ENCODE measurements at regions of chr11 and their contacts with region 1.

Region 1: DNA sequence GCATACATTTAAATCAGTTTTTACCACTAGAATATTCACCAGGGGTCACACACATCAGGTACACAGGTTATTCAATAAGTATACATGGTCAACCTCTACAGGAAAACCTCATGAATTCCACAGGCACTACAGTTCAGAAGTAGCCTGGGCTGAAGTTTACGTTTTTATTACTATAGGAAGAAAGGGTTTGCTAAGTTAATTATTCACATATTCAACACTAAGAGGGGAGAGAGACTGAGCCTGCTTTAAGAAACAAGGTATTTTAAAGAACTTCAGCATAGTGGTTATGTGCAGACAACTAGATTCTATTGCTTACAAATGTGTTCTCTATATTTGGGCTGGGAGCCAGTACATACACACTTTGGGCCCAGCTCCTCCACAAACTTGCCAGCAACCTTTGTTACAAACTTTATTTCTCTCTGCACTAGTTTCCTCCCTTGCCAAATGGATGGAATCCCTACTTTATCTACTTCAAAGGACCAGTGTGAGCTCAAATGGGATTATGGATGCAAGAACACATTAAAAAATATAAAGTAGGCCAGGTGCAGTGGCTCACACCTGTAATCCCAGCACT is 31.9 kb downstream of the IL18BP start:
- DNase-seq: no peak
- H3K4me3 ChIP-seq: no peak overlapping the region
- H3K27ac ChIP-seq: no peak overlapping the region
- H3K4me1 ChIP-seq: peaks cover 2% of the 10 kb centered on the region
- H3K27me3 ChIP-seq: no peaks in the 10 kb centered on the region
- CTCF ChIP-seq: no peak
- POLR2A ChIP-seq: no peak

Region 2: GRCh38 chr11:71977743-71978418 is 52.7 kb before region 1 on chr11:
- CTCF ChIA-PET with region 1: interaction called, 13 read pairs
- POLR2A ChIA-PET with region 1: no interaction called
- dilution Hi-C with region 1: no loop called
- intact Hi-C with region 1: no loop called
- DNase-seq: peak; percentile 67
- H3K4me3 ChIP-seq: no peak overlapping the region
- H3K27ac ChIP-seq: no peak overlapping the region
- H3K4me1 ChIP-seq: no peaks in the 10 kb centered on the region
- H3K27me3 ChIP-seq: no peaks in the 10 kb centered on the region
- CTCF ChIP-seq: peak; percentile 54 to 57
- POLR2A ChIP-seq: no peak

Region 3: DNA sequence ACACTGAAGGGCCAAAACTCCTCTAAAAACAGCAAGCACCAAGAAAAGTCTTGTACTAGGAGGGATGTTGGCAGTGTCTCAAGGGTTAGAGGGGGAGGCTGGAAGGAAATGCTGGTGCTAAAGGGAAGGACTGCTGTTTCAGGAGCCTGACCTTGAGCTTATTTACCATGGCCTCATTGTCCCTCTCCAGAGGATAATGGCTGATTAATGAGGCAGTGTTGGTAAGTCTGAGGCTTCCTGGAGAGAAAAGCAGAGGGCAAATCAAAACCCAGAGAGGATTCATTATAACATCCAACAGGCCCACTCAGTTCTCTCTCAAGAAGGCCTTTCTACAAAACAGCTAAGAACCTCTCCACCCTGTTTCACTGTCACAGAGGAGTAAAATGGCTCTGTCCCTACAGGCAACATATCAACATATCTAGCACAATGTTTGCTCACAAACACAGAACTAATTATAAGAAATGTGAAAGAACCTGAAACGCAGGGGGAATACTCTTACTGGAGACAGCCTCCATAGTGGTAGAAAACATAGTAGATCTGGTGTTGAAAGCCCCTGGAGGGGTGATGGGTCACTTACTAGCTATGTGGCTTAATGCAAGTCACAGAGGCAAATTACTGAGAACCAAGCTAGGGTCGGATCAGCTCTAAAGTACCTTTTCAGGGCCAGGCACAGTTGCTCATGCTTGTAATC is 18.4 kb after region 1 on chr11:
- CTCF ChIA-PET with region 1: interaction called, 28 read pairs
- POLR2A ChIA-PET with region 1: no interaction called
- dilution Hi-C with region 1: no loop called
- intact Hi-C with region 1: no loop called
- DNase-seq: peak; percentile 90
- H3K4me3 ChIP-seq: peak overlapping the region in 1 of 3 experiments; percentile 15
- H3K27ac ChIP-seq: peak overlapping the region; percentile 40
- H3K4me1 ChIP-seq: peaks cover 8% of the 10 kb centered on the region
- H3K27me3 ChIP-seq: no peaks in the 10 kb centered on the region
- CTCF ChIP-seq: no peak
- POLR2A ChIP-seq: peak; percentile 19

Region 4: DNA sequence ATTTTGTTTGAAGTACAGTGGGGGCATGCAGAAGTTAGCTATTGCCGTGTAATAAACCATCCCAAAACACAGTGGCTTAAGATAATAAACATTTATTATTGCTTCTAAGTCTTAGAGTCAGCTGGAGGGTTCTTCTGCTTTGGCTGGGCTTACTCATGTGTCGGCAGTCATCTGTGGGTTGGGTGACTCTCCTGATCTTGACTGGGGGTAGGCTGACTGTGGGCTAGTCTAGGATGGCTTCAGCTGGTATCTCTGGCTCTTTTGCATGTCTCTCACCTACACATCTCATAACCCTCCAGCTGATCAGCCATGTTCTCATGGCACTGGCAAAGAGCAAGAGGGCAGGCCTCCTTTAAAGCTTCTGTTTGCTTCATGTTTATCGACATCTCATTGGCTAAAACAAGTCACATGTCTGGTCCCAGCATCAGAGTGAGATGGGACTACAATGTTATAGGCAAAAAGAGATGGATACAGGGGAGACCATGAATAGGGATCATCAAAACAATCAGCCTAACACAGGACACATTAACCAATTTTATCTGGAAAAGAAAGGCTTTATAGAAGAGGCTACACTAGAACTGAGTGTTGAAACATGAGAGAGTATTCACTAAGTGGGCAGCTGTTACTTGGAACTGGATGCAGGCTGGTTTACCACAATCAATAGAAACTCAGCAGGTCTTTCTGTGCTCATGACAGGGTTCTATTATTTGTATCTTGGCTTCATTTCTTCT is 55.2 kb after region 1 on chr11:
- CTCF ChIA-PET with region 1: interaction called, 402 read pairs
- POLR2A ChIA-PET with region 1: interaction called, 3 read pairs
- dilution Hi-C with region 1: loop called (anchors 10 kb)
- intact Hi-C with region 1: no loop called
- DNase-seq: no peak
- H3K4me3 ChIP-seq: no peak overlapping the region
- H3K27ac ChIP-seq: no peak overlapping the region
- H3K4me1 ChIP-seq: peaks cover 11% of the 10 kb centered on the region
- H3K27me3 ChIP-seq: no peaks in the 10 kb centered on the region
- CTCF ChIP-seq: no peak
- POLR2A ChIP-seq: no peak

Region 5: GRCh38 chr11:72141066-72141465 is 110.5 kb after region 1 on chr11:
- CTCF ChIA-PET with region 1: interaction called, 190 read pairs
- POLR2A ChIA-PET with region 1: no interaction called
- dilution Hi-C with region 1: no loop called
- intact Hi-C with region 1: loop called (anchors 1 kb)
- DNase-seq: no peak
- H3K4me3 ChIP-seq: no peak overlapping the region
- H3K27ac ChIP-seq: no peak overlapping the region
- H3K4me1 ChIP-seq: no peaks in the 10 kb centered on the region
- H3K27me3 ChIP-seq: peaks cover 7 to 10% of the 10 kb centered on the region in 2 experiments
- CTCF ChIP-seq: no peak
- POLR2A ChIP-seq: no peak

Region 6: GRCh38 chr11:72189461-72190275 is 159.1 kb after region 1 on chr11:
- CTCF ChIA-PET with region 1: interaction called, 54 read pairs
- POLR2A ChIA-PET with region 1: no interaction called
- dilution Hi-C with region 1: no loop called
- intact Hi-C with region 1: no loop called
- DNase-seq: no peak
- H3K4me3 ChIP-seq: no peak overlapping the region
- H3K27ac ChIP-seq: no peak overlapping the region
- H3K4me1 ChIP-seq: no peaks in the 10 kb centered on the region
- H3K27me3 ChIP-seq: peaks cover 0 to 1% of the 10 kb centered on the region in 2 experiments
- CTCF ChIP-seq: no peak
- POLR2A ChIP-seq: no peak

Region 7: DNA sequence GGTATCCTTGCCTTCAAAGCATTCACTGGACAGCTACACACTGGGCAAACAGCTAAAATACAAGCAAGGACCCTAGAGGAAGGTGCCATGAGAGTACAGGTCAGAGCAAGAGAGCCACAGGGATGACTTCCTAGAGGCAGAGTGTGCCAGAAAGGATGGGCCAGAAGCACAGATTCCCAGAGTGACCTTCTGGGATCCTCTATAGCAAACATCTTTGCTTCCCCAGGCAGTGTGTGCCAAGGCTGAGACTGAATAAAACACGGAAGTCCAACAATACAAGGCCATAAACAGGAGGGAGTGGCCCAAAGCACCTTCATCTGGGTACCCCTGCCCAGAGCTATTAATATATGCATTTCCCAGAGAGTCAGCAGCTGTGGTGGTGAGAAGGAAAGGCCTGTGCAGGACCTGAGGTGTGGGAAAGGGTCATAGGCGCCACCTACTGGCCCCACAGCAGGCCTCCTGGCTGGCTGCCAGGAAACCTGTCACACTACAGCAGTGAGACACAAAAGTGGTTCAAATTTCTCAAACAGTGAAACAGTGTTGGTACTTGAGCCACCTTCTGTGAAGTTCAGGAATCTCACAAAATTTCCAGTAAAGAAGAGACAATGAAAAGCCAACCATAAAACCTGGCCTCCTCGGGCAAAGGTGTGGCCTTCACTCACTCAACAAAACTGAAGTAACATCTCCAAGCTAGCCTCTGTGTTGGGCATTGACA is 383.5 kb after region 1 on chr11:
- CTCF ChIA-PET with region 1: interaction called, 4 read pairs
- POLR2A ChIA-PET with region 1: no interaction called
- dilution Hi-C with region 1: no loop called
- intact Hi-C with region 1: loop called (anchors 1 kb)
- DNase-seq: peak; percentile 81
- H3K4me3 ChIP-seq: no peak overlapping the region
- H3K27ac ChIP-seq: no peak overlapping the region
- H3K4me1 ChIP-seq: no peaks in the 10 kb centered on the region
- H3K27me3 ChIP-seq: no peaks in the 10 kb centered on the region
- CTCF ChIP-seq: peak; percentile 90 to 92
- POLR2A ChIP-seq: no peak

Measured in endothelial cell of umbilical vein (primary cell).